ENCODE measurements at regions of chr11 and their contacts with region 1.

Region 1: GRCh38 chr11:68843703-68844312 is 2.1 kb upstream of the CPT1A start:
- DNase-seq: peak; percentile 79
- H3K4me3 Mint-ChIP-seq: peak overlapping the region; percentile 79
- H3K27ac Mint-ChIP-seq: peak overlapping the region; percentile 88
- H3K4me1 Mint-ChIP-seq: peaks cover 45% of the 10 kb centered on the region
- H3K27me3 Mint-ChIP-seq: peaks cover 41% of the 10 kb centered on the region

Region 2: DNA sequence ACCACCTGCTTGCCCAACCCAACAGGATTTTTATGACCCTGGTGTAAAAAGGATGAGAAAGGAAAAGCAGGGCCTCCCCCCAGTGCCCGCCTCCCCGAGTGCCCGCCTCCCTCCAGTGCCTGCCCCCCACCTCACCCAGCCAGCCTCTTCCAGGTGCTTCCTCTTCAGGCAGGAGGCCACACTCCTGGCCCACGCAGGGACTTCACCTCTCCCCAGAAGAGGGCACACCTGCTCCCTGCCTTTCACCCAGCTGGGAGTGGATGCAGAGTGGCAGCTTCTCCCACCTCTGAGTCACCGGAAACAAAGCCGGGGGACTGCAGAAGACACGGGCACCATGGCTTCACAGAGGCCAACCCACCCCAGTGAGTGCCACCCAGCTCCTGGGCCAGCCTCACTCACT is 18.2 kb before region 1 on chr11:
- CTCF ChIA-PET with region 1: interaction called, 11 read pairs
- DNase-seq: peak; percentile 72
- H3K4me3 Mint-ChIP-seq: no peak overlapping the region
- H3K27ac Mint-ChIP-seq: peak overlapping the region; percentile 45
- H3K4me1 Mint-ChIP-seq: peaks cover 40% of the 10 kb centered on the region
- H3K27me3 Mint-ChIP-seq: no peaks in the 10 kb centered on the region